Activated T-helper 2 cell treated with anti-CD3 and anti-CD28 coated beads, Interferon-gamma antibody, Interleukin-2, Interleukin-4, amounts not matched to agents 10 μg/mL and 5 μg/mL and 100 μg/mL, durations not matched to agents 14 hours and 24 hours and 36 hours (primary cell): ENCODE measurements at regions of chr1 and their contacts with region 1.

Region 1: GRCh38 chr1:186806477-186806876 is 22.3 kb upstream of the PLA2G4A start:
- DNase-seq: no peak
- H3K4me3 Mint-ChIP-seq: no peak overlapping the region
- H3K27ac Mint-ChIP-seq: no peak overlapping the region
- H3K4me1 Mint-ChIP-seq: no peaks in the 10 kb centered on the region
- H3K27me3 Mint-ChIP-seq: peaks cover 15% of the 10 kb centered on the region

Region 2: GRCh38 chr1:186605762-186606350 is 200.6 kb before region 1 on chr1:
- intact Hi-C with region 1: loop called (anchors 5 kb)
- DNase-seq: no peak
- H3K4me3 Mint-ChIP-seq: no peak overlapping the region
- H3K27ac Mint-ChIP-seq: peak overlapping the region; percentile 26
- H3K4me1 Mint-ChIP-seq: peaks cover 7% of the 10 kb centered on the region
- H3K27me3 Mint-ChIP-seq: peaks cover 60% of the 10 kb centered on the region

Region 3: DNA sequence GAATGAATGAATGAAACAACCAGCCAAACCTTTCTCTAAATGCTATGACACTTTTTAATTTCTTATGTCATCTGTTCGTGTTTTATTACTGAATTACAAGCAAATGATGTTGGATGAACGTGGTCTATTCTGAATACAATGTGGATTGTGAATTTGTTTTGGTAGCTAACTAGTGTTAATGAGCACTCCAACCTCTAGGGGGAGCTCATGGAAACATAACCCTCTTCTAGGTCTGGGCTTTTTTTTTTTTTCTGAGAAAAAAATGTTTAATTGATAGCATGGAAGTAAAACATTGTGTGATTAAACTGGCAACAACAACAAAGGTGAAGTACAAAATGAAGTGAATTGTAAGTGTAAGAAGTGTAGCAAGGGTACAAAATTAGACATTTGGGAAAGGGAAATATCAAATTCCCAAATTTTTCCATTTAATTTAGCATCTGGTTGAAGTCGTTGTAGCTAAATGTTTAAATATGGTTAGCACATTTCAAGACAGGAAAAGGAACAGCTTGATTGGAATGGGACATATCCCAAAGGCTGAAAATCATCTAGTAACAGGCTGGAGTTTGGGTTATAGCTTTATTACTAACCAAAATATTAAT is 83.7 kb before region 1 on chr1:
- intact Hi-C with region 1: loop called (anchors 2 kb)
- DNase-seq: no peak
- H3K4me3 Mint-ChIP-seq: no peak overlapping the region
- H3K27ac Mint-ChIP-seq: no peak overlapping the region
- H3K4me1 Mint-ChIP-seq: peaks cover 13% of the 10 kb centered on the region
- H3K27me3 Mint-ChIP-seq: peaks cover 10% of the 10 kb centered on the region

Region 4: GRCh38 chr1:186763107-186763506 is 43.4 kb before region 1 on chr1:
- intact Hi-C with region 1: no loop called
- DNase-seq: no peak
- H3K4me3 Mint-ChIP-seq: no peak overlapping the region
- H3K27ac Mint-ChIP-seq: peak overlapping the region; percentile 31
- H3K4me1 Mint-ChIP-seq: peaks cover 39% of the 10 kb centered on the region
- H3K27me3 Mint-ChIP-seq: peaks cover 2% of the 10 kb centered on the region

Region 5: GRCh38 chr1:186792870-186793581 is 13.5 kb before region 1 on chr1:
- intact Hi-C with region 1: no loop called
- DNase-seq: no peak
- H3K4me3 Mint-ChIP-seq: no peak overlapping the region
- H3K27ac Mint-ChIP-seq: peak overlapping the region; percentile 56
- H3K4me1 Mint-ChIP-seq: peaks cover 20% of the 10 kb centered on the region
- H3K27me3 Mint-ChIP-seq: peaks cover 9% of the 10 kb centered on the region